Ovary (tissue), 10 donors: ENCODE measurements at regions of chr12 and their contacts with region 1.

Region 1: DNA sequence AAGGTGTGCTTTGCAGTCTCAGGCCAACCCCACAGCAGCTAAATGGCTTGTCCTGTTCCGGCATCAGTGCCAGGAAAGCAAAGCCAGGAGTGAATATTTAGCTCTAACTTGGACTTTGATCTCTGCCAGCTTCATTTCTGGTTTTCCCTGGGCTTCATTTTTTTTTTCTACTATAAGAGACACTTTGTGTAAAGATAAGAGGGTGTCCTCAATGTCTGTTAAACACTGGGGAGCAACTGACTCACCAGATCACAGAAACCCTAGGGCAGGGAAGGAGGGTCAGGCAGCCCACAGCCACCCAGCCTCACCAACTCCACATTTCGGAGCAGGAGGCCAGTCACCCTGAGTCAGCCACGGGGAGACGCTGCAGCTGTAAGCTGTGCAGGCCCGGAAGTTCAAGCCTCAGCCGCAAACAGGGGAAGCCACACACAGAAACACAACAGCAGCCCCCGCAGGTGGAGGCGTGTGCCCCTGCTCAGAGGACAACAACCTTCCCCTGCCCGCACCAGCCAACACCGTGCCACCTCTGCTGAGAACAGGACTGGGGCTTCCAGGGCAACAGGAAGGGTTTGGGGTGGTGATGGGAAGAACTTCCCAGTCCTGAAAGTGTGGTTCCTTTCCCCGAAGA is 6.3 kb downstream of the TNFRSF1A start:
- DNase-seq: peak; percentile 76 to 82 (median 79)
- H3K4me3 ChIP-seq: peak overlapping the region; percentile 41
- H3K27ac ChIP-seq: peak overlapping the region; percentile 82 to 97
- H3K4me1 ChIP-seq: peaks cover 22% of the 10 kb centered on the region
- H3K27me3 ChIP-seq: no peaks in the 10 kb centered on the region
- CTCF ChIP-seq: peak in 2 of 3 donors; percentile 48 to 62
- EP300 ChIP-seq: no peak
- POLR2A ChIP-seq: no peak

Region 2: GRCh38 chr12:6376079-6376869 is 40.7 kb after region 1 on chr12:
- intact Hi-C with region 1: loop called (anchors 5 kb)
- DNase-seq: peak in 4 of 5 donors; percentile 61 to 76 (median 62)
- H3K4me3 ChIP-seq: no peak overlapping the region
- H3K27ac ChIP-seq: peak overlapping the region; percentile 27 to 70
- H3K4me1 ChIP-seq: peaks cover 17% of the 10 kb centered on the region
- H3K27me3 ChIP-seq: no peaks in the 10 kb centered on the region
- CTCF ChIP-seq: peak in 2 of 3 donors; percentile 29 to 34
- EP300 ChIP-seq: peak; percentile 35
- POLR2A ChIP-seq: no peak

Region 3: DNA sequence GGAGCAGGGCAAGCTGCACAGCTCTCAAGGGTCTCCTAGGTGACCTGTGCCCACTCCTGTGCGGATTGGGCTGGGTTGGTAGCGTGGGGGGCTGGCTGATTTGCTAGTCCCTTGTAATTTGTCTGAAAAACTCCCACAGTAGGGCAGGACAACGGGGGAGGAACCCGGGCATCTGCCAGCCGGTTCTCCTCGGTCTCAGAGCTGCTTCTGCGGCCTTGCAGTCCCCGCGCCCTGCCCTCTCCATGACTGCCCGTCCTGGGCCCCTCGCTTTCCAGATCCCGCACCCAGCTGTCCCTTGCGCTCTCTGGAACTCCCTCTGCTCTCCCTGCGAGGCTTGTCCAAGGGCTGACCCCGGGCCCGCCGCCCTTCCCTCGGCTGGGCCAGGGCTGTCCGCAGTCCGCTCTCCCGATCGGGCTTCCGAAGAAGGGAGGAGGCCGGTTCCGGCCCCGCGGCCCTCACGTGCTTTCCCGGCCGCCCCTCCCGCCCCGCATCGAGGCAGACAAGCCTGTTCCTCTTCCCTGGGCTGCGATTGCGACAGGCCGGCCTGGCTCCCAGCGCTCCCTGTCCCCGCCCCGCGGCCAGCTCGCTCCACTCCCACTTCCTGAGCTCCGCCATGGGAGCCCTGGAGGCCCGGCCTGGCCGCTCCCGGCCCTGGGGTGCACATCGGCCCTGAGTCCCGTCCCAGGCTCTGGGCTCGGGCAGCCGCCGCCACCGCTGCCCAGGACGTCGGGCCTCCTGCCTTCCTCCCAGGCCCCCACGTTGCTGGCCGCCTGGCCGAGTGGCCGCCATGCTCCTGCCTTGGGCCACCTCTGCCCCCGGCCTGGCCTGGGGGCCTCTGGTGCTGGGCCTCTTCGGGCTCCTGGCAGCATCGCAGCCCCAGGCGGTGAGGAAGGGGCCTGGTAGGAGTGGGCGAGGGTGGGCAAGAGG is 48.3 kb after region 1 on chr12 and contains the start of gene LTBR:
- intact Hi-C with region 1: loop called (anchors 5 kb)
- DNase-seq: peak; percentile 95 to 97 (median 96)
- H3K4me3 ChIP-seq: peak within 1 kb of the TSS; percentile 69
- H3K27ac ChIP-seq: peak within 1 kb of the TSS; percentile 89 to 91
- H3K4me1 ChIP-seq: peaks cover 10% of the 10 kb centered on the region
- H3K27me3 ChIP-seq: no peaks in the 10 kb centered on the region
- CTCF ChIP-seq: peak in 1 of 3 donors; percentile 29
- EP300 ChIP-seq: peak; percentile 85
- POLR2A ChIP-seq: peak; percentile 81
- total RNA-seq, gene LTBR: 55.8 to 131 (median 92.6) TPM

Region 4: GRCh38 chr12:6533923-6534694 is 198.5 kb after region 1 on chr12 and contains the start of gene GAPDH:
- intact Hi-C with region 1: loop called in 1 of 4 experiments (anchors 5 kb)
- DNase-seq: peak; percentile 91 to 94 (median 93)
- H3K4me3 ChIP-seq: peak within 1 kb of the TSS; percentile 62
- H3K27ac ChIP-seq: peak within 1 kb of the TSS; percentile 93 to 96
- H3K4me1 ChIP-seq: peaks cover 14% of the 10 kb centered on the region
- H3K27me3 ChIP-seq: no peaks in the 10 kb centered on the region
- CTCF ChIP-seq: peak in 1 of 3 donors; percentile 37
- EP300 ChIP-seq: no peak
- POLR2A ChIP-seq: peak; percentile 97
- total RNA-seq, gene GAPDH: 661 to 1,442 (median 1,249) TPM